Activated naive CD8-positive, alpha-beta T cell treated with anti-CD3 and anti-CD28 coated beads, Interleukin-2, amount 10 ng/mL, durations not matched to agents 7 days and 5 days (primary cell): ENCODE measurements at regions of chr17 and their contacts with region 1.

Region 1: GRCh38 chr17:76191896-76192295 is 48.4 kb downstream of the RNF157 start:
- DNase-seq: no peak
- ATAC-seq: peak; percentile 80
- H3K4me3 Mint-ChIP-seq: peak overlapping the region; percentile 74
- H3K27ac Mint-ChIP-seq: peak overlapping the region; percentile 91
- H3K4me1 Mint-ChIP-seq: peaks cover 69% of the 10 kb centered on the region
- H3K27me3 Mint-ChIP-seq: no peaks in the 10 kb centered on the region

Region 2: DNA sequence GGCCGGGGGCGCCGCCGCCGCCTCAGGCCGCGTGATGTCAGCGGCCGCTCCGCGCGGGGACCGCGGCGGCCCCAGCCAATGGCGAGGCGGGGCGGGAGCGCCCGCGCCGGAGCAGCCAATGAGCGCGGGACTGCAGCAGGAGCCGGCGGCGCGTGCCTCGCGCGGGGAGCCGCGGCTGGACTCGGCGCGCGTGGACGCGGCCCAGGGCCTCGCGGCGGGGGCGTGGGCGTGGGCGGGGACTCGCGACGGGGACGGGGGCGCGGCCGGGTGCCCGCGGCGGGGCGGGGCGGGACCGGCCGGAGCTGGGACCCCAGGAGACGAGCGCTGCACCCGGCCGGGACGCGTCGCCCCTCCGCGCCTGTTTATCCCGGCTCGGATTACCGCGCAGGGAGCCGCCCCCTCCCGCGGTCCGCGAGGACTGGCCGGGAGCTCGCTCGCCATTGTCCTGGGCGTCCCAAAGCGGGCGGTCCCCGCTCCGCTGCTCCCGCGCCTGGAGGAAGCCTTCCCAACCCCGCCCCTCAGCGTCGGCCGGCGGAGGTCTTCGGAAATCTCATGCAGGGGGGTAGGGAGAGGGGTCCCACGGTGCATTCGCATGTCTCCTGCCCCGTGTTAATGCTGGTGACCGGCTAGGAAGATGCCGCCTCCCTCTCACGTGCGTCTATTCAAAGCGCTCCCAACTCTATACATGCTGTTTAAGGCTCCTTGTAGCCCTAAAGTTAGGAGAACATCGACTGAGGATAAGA is 48.7 kb after region 1 on chr17 and contains the start of gene RNF157:
- POLR2A ChIA-PET with region 1: interaction called, 62 read pairs
- DNase-seq: peak; percentile 84
- ATAC-seq: peak; percentile 87
- H3K4me3 Mint-ChIP-seq: peak within 1 kb of the TSS; percentile 94
- H3K27ac Mint-ChIP-seq: peak within 1 kb of the TSS; percentile 96
- H3K4me1 Mint-ChIP-seq: peaks cover 62% of the 10 kb centered on the region
- H3K27me3 Mint-ChIP-seq: no peaks in the 10 kb centered on the region
- total RNA-seq, gene RNF157: 103 to 110 TPM

Region 3: DNA sequence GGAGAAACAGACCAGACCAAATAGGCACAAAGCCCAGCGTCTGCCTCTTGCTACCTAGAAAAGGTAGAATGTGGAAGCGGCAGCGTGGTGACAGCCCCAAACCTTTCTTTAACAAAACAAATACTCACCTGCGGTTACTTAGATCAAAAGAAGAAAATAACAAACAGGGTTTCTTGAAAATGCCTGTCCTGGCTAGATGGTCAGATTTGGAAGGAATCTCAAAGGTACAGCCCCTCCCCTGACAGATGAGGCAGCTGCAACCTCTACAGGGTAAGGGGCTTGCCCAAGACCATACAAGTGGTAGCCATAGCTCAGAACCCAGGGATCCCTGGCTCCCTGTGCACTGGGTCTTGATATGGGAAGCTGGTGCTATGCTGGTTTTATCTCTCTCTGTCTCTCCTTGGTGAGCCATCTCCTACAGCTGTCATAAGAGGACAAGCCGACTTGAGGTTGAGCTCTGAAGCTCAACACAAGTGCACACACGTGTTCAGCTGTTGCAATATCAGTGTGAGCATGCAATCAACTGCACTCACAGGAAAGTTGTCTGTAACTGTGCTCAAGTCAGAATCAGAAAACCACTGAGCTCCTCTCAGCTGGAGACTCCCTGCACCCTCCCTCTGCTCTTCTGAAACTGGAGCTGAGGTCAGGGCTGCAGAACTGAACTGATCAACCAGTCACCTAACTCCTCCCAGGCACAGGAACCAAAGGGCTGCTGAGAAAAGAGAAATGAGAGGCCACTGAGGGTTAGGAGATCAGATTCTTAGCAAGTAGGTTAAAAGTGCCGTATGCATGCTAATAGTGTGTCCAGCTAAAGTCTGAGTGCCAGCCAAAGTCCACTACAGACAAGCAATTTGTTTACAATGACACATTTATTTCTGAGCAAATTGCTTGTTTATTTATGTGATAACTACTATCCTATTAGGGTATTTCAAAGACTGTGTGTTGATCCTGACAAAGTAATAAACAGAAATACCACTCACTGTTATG is 54.5 kb after region 1 on chr17:
- POLR2A ChIA-PET with region 1: interaction called, 1,184 read pairs
- DNase-seq: peak; percentile 60
- ATAC-seq: peak; percentile 98
- H3K4me3 Mint-ChIP-seq: peak overlapping the region; percentile 59
- H3K27ac Mint-ChIP-seq: peak overlapping the region; percentile 95
- H3K4me1 Mint-ChIP-seq: peaks cover 56% of the 10 kb centered on the region
- H3K27me3 Mint-ChIP-seq: no peaks in the 10 kb centered on the region

Region 4: DNA sequence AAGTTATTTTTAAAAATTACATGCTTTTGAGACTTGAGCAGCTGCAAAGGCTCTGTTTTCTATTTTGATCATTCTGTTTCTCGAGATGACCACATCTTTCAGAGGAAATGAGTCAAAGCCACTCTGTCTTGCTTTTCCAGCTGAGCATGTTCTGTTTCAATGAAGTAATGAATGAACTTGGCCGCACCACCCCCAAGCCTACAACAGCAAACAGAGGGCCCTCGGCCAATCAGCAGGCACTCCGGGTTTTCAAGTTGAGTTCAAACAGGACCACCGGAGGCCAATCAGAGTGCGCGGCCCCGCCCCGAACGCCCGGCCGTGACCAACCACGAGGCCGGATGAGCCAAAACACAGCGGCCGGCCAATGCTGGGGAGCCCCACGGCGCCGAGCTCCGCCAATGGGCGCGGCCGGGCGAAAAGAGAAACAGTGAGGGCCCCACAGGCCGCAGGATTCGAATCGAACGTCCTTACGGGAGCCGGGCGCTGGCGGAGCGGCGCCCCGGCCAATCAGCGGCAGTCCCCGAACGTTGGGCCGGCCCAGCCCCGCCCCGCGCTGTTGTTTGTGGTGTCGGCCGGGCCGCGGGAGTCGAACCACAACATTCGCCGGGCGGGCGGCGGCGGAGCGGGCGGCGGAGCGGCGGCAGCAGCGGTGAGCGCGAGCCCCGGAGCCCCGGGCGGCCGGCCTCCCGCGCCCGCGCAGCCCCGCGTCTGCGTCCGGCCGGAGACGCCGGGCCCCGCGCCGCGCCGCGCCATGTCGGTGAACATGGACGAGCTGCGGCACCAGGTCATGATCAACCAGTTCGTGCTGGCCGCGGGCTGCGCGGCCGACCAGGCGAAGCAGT is 73.1 kb after region 1 on chr17 and contains the start of gene UBALD2:
- POLR2A ChIA-PET with region 1: interaction called, 1,184 read pairs
- DNase-seq: peak; percentile 99
- ATAC-seq: peak; percentile 81
- H3K4me3 Mint-ChIP-seq: peak within 1 kb of the TSS; percentile 88
- H3K27ac Mint-ChIP-seq: peak within 1 kb of the TSS; percentile 96
- H3K4me1 Mint-ChIP-seq: peaks cover 51% of the 10 kb centered on the region
- H3K27me3 Mint-ChIP-seq: no peaks in the 10 kb centered on the region
- total RNA-seq, gene UBALD2: 344 to 375 TPM